ENCODE measurements at regions of chr15 and their contacts with region 1.

Region 1: DNA sequence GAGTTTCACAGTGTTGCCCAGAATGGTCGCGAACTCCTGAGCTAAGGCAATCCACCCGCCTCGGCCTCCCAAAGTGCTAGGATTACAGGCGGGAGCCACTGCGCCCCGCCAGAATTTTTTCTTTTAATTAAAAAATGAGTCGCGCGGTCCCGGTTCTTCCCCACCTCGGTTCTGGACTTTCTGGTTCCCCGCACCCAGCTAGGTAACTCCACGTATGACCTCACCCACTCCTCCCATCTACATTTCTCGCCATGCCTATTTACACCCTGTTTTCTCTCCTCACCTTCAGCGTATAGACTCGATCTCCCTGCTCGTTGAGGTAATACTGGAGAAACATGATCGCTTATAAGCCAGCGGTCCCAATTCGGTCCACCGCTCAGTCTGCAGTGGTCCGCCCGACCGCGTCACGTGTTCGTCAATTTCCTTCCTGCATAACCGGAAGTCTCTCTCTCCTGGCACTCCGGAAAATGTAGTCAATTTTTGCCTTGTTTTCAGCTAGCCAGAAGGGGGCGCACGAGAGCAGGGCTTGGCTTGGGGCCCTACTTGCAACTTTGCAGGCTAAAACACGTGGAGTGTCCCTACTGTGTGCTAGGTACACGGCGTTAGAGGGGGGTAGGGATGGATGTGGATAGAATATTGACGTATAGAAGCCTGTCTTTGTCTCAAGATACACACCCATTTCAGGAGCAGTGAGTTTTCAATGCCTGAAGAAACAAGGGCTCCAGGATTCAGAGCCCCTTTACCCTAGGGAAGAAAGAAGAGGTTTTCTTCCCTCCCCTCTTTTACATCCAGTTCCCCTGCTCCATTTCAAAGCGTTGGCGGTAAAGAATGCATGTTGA is at the starts of genes NOP10 and NUTM1:
- DNase-seq: peak; percentile 91
- ATAC-seq: peak; percentile 75
- H3K4me3 ChIP-seq: peak within 1 kb of the TSS; percentile 85
- H3K27ac ChIP-seq: peak within 1 kb of the TSS; percentile 88
- H3K4me1 ChIP-seq: peaks cover 29% of the 10 kb centered on the region
- H3K27me3 ChIP-seq: no peaks in the 10 kb centered on the region
- CTCF ChIP-seq: peak; percentile 93
- total RNA-seq, gene NOP10: 291 and 323 TPM in 2 replicates
- total RNA-seq, gene NUTM1: 0.04 TPM in 1 of 2 replicates, not detected in the other

Region 2: DNA sequence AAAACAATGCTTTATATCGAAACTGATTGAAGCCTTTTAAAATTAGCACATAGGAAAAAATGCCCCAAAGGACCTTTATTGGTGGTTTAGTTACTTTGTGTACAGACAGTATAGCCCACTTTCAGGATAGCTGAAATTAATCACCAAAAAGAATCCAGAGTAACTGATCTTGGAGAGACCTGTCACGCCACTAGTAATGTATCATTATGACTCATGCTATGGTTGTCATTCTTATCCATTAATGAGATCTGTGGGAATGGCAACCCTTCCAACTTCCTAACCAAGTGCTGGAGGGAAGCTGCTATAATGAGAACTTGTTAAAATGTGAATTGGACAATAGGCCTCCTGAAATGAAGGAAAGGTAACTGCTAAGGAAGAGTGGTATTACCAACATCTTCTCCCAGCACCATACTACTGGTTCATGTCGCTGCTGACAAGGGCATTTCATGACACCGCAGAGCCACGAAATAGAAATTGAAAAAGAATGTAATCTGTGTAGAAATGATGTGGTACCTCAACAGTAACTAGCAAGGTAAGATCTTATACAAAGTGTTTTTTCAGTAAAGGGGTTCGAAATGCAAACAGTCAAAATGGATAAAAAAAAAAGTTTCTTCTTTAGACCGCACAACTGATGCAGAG is 125.2 kb before region 1 on chr15:
- CTCF ChIA-PET with region 1: no interaction called
- POLR2A ChIA-PET with region 1: no interaction called
- intact Hi-C with region 1: loop called (anchors 2 kb)
- DNase-seq: peak; percentile 95
- ATAC-seq: peak; percentile 76
- H3K4me3 ChIP-seq: peak overlapping the region; percentile 38
- H3K27ac ChIP-seq: peak overlapping the region; percentile 99
- H3K4me1 ChIP-seq: peaks cover 28% of the 10 kb centered on the region
- H3K27me3 ChIP-seq: no peaks in the 10 kb centered on the region
- CTCF ChIP-seq: no peak

Region 3: DNA sequence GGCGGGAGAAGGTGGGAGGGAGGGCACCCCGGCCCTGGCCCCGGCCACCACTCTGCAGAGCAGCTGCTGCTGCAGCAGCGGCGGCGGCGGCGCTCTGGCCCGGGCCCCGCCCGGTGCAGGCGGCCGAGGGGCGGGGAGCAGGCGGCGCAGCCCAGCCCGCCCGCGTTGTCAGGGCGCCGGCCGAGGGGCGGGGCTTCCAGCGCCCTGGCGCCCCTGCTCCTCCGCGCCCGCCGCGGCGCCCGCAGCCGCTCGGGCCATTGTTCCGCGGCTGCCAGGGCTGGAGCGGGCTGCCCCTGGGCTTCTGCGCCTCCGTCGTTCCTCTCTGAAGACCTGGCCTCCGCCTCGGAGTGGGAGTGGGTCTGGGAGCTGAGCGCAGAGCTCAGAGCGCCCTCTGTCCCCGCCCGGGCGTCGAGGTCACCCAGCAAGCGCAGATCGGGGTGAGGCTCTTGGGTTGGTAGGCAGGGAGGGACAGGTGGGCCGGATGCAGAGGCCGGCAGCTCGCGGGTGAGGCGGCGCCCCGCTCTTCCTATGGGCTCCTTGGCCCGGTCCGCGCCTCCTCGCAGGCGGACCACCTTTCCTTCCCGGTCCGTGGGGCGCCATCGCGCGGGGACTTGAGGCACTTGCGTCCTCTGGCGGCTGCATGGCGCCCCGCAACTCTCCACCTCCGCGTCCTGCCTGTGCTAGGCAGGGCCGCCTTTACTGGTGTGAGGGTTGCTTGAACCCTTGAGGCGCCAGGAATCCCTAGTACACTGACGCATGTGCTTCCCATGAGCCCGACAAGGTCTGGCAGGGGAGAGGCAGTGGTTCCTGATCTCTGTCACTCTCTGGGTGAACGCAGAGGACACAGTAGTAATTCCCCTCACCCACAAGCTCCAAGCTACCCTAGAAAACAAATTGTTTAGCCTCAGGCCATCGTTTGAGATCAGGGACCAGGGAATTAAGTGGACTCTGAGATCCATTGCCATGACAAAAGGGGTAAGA is 24.4 kb after region 1 on chr15 and contains the start of gene LPCAT4:
- CTCF ChIA-PET with region 1: interaction called, 11 read pairs
- POLR2A ChIA-PET with region 1: interaction called, 3 read pairs
- intact Hi-C with region 1: loop called (anchors 1 kb)
- DNase-seq: peak; percentile 90
- ATAC-seq: peak; percentile 79
- H3K4me3 ChIP-seq: peak within 1 kb of the TSS; percentile 100
- H3K27ac ChIP-seq: peak within 1 kb of the TSS; percentile 99
- H3K4me1 ChIP-seq: peaks cover 41% of the 10 kb centered on the region; the same call in 1 of the 2 replicates
- H3K27me3 ChIP-seq: no peaks in the 10 kb centered on the region
- CTCF ChIP-seq: peak; percentile 94
- total RNA-seq, gene LPCAT4: 37.0 and 38.2 TPM in 2 replicates

Region 4: GRCh38 chr15:34437687-34438086 is 94.7 kb after region 1 on chr15 and contains the start of gene GOLGA8A:
- CTCF ChIA-PET with region 1: no interaction called
- POLR2A ChIA-PET with region 1: no interaction called
- intact Hi-C with region 1: no loop called
- DNase-seq: peak; percentile 84
- ATAC-seq: peak; percentile 18
- H3K4me3 ChIP-seq: peak within 1 kb of the TSS; percentile 75
- H3K27ac ChIP-seq: no peak within 1 kb of the TSS
- H3K4me1 ChIP-seq: peaks cover 12% of the 10 kb centered on the region
- H3K27me3 ChIP-seq: peaks cover 2% of the 10 kb centered on the region; the same call in 1 of the 2 replicates
- CTCF ChIP-seq: no peak
- total RNA-seq, gene GOLGA8A: 25.3 and 37.3 TPM in 2 replicates

Measured in PC-3 (cell line).